WTC11 (cell line): ENCODE measurements at regions of chr22 and their contacts with region 1.

Region 1: DNA sequence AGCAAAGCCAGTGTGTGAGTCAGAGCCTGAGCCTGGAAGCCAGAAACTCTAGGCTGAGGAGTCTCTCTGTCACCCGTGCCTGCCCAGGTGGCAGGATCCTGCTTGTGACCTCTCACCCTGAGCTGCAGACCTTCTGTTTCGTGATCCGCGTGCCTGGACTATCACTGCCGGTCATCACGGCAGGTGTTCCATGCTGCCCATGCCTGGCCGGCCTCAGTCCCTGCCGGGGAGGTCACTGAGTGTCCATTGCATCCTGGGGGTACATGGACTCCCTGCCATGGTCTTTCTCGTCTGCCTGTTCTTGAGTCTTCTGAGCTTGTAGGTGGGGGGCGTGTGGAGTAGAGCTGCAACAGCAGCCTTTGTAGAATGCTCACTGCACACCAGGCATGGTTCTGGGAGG is 1032.4 kb downstream of the TBC1D22A start:
- DNase-seq: no peak
- ATAC-seq: no peak
- H3K4me3 Mint-ChIP-seq: no peak overlapping the region
- H3K27ac Mint-ChIP-seq: no peak overlapping the region
- H3K4me1 Mint-ChIP-seq: no peaks in the 10 kb centered on the region
- H3K27me3 Mint-ChIP-seq: no peaks in the 10 kb centered on the region
- CTCF ChIP-seq: no peak

Region 2: DNA sequence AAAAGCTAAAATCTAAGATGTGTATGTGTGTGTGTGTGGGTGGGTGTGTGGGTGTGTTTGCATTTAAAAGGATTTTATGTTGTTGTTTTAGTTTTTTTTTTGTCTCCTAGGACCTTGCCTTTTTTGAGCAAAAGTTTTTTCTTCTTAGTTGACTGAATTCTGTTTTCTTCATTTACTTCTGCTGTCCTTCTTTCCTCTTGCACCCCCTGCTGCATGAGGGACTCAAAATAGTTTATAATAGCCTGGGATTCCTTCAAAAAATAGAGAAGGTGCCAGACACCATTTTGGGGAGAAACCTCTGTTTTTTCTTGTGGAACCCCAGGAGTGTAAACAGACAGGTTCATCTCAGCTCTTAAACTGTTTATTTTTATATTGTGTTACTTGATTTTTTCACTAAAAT is 214.7 kb before region 1 on chr22:
- CTCF ChIA-PET with region 1: no interaction called
- POLR2A ChIA-PET with region 1: no interaction called
- DNase-seq: no peak
- ATAC-seq: no peak
- H3K4me3 Mint-ChIP-seq: no peak overlapping the region
- H3K27ac Mint-ChIP-seq: no peak overlapping the region
- H3K4me1 Mint-ChIP-seq: peaks cover 12% of the 10 kb centered on the region
- H3K27me3 Mint-ChIP-seq: peaks cover 5% of the 10 kb centered on the region
- CTCF ChIP-seq: no peak

Region 3: DNA sequence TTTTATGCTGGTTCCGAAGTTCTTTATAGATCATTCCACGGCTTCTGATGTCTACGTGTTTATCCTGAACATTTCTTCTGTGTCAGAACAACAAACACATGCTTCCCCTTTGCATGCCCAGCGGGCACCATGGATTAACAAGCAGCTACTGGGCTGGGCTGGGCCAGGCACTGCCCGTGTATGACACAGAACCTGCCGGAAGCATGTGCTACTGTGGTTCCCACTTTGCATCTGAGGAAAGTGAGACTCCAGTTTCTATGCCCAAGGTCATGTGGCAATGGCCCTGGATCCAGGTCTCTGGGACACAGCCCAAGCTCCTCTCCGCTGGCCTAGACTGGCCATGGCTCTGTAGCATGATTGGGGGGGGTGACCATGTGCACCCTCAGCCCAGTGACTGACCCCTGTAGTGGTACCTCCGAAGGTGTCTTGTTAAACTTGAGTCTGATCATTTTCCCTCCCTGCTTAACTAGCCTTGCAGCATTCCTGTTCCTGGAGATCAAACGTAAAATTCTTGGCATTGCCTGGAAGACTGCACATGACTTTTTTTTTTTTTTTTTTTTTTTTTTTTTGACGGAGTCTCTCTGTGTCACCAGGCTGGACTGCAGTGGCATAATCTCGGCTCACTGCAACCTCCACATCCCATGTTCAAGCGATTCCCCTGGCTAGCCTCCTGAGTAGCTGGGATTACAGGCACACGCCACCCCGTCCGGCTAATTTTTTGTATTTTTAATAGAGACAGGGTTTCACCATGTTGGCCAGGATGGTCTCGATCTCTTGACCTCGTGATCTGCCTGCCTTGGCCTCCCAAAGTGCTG is 83.6 kb after region 1 on chr22:
- CTCF ChIA-PET with region 1: no interaction called
- POLR2A ChIA-PET with region 1: interaction called, 12 read pairs
- DNase-seq: no peak
- ATAC-seq: no peak
- H3K4me3 Mint-ChIP-seq: no peak overlapping the region
- H3K27ac Mint-ChIP-seq: no peak overlapping the region
- H3K4me1 Mint-ChIP-seq: no peaks in the 10 kb centered on the region
- H3K27me3 Mint-ChIP-seq: no peaks in the 10 kb centered on the region
- CTCF ChIP-seq: no peak